ENCODE measurements at regions of chr3 and their contacts with region 1.

Region 1: GRCh38 chr3:115836944-115837343 is 213.6 kb downstream of the GAP43 start:
- DNase-seq: no peak
- H3K4me3 ChIP-seq: no peak overlapping the region
- CTCF ChIP-seq: peak; percentile 22

Region 2: DNA sequence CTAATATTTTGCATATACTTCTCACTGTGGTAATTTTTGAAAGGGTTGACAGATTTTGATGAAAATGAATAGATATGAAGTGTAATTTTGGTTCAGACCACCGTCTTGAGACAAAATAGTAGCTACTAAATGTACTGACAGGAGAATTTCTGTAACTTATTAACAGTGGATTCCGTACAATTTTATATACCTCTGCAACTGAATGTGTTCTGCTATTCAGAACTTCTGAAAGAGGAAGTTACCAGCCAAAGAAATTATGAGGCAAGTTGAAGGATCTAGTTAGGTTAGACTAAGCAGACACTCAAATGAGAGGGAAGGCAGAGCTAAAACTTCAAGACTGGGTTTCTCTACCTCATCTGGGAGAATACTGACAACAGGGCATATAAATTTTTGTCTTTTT is 184.2 kb before region 1 on chr3:
- CTCF ChIA-PET with region 1: no interaction called
- POLR2A ChIA-PET with region 1: no interaction called
- DNase-seq: no peak
- H3K4me3 ChIP-seq: no peak overlapping the region
- CTCF ChIP-seq: no peak

Region 3: GRCh38 chr3:115713284-115713683 is 123.7 kb before region 1 on chr3:
- CTCF ChIA-PET with region 1: no interaction called
- POLR2A ChIA-PET with region 1: no interaction called
- DNase-seq: no peak
- H3K4me3 ChIP-seq: no peak overlapping the region
- CTCF ChIP-seq: no peak

Region 4: GRCh38 chr3:115819785-115820384 is 17.1 kb before region 1 on chr3:
- CTCF ChIA-PET with region 1: interaction called, 42 read pairs
- POLR2A ChIA-PET with region 1: interaction called, 4 read pairs
- DNase-seq: no peak
- H3K4me3 ChIP-seq: no peak overlapping the region
- CTCF ChIP-seq: peak; percentile 87

Region 5: DNA sequence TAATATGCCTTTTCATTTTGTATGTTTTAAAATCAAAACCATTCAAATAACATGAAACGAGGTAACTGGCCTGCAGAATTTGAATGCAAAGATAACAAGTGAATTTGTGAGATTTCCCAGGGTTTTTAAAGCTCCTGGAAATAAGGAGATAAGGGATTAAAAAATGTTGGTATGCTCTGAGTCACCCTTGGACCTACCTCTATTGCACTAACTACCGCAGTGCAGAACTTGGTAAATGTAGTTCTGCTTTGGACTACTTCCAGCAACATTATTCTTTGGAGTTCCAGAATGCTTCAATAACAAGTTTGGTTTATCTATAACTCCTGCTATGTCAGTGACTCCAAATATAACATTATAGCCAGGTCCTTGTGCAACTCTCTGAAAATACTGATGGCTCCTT is 11.9 kb before region 1 on chr3:
- CTCF ChIA-PET with region 1: interaction called, 42 read pairs
- POLR2A ChIA-PET with region 1: interaction called, 4 read pairs
- DNase-seq: no peak
- H3K4me3 ChIP-seq: no peak overlapping the region
- CTCF ChIP-seq: no peak

Region 6: GRCh38 chr3:115848641-115849040 is 11.7 kb after region 1 on chr3:
- CTCF ChIA-PET with region 1: interaction called, 43 read pairs
- POLR2A ChIA-PET with region 1: no interaction called
- DNase-seq: no peak
- H3K4me3 ChIP-seq: no peak overlapping the region
- CTCF ChIP-seq: no peak

Region 7: DNA sequence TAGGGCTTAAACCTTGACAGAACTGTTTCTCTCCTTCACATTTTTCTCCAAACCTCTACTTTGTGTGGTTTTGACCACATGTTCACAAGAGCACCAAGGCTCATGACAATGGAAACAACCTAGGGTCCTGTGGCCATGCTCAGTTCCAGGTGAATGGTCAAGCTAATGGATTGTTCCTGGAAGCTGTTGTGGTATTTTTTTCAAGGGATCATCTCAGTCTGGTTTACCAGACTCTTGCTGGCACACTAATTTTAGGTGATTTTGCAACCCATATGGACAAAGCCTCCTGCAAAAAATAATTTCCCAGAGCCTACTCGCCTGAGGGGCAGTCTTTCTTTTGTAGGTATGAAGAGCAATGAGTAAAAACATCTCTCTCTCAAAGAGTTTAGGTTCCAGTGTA is 541.1 kb after region 1 on chr3:
- CTCF ChIA-PET with region 1: no interaction called
- POLR2A ChIA-PET with region 1: no interaction called
- DNase-seq: no peak
- H3K4me3 ChIP-seq: no peak overlapping the region
- CTCF ChIP-seq: no peak

Measured in AG04449 (cell line).